HEK293T (cell line): ENCODE measurements at regions of chr3 and their contacts with region 1.

Region 1: GRCh38 chr3:64224826-64225610 is at the start of gene PRICKLE2:
- DNase-seq: peak; percentile 32

Region 2: DNA sequence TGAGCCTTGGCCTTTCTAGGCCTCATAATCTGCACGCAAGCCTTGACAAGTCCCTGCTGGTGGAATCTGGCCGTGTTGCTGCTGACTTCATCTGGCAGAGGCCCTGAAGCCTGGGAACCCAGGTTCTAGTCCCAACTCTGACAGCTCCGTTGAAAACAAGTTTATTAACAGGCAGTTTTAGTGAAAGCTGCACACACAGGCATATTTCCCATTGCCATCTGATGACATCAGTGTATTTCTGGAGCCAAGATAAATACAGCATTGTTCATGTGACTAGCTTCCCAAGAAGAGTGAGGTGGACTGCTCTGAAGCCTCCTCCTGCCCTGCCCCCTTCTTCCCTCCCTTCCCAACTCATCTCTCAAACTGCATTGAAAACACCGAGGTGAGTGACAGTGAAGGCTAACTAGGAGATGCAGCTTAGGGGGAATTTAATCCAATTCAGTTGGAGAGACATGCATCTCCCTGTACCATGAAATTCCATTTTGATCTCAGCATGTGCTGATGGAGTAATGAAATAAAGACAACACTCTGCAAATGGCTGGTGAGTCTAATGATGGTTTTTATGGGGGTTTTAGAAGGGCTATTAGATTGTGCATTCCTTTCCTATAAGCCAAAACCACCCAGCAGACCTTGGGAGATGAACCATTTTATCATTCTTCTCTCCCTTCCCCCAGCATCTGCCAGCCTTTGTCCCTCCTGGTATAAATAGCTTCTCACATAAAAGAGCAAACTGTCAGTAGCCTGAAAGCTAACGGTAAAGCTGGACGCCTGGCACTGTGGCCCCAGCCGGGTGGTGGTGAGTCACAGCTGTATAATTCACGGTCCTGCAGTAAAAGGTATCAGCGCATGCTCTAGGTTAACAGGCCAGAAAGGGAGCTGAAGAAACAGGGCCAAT is 37.7 kb before region 1 on chr3:
- CTCF ChIA-PET with region 1: interaction called, 4 read pairs
- POLR2A ChIA-PET with region 1: interaction called, 17 read pairs
- DNase-seq: peak; percentile 51

Region 3: GRCh38 chr3:64863214-64864212 is 638.5 kb after region 1 on chr3:
- CTCF ChIA-PET with region 1: no interaction called
- POLR2A ChIA-PET with region 1: no interaction called
- DNase-seq: no peak